Activated naive CD4-positive, alpha-beta T cell treated with anti-CD3 and anti-CD28 coated beads for 36 hours (primary cell): ENCODE measurements at regions of chr7 and their contacts with region 1.

Region 1: DNA sequence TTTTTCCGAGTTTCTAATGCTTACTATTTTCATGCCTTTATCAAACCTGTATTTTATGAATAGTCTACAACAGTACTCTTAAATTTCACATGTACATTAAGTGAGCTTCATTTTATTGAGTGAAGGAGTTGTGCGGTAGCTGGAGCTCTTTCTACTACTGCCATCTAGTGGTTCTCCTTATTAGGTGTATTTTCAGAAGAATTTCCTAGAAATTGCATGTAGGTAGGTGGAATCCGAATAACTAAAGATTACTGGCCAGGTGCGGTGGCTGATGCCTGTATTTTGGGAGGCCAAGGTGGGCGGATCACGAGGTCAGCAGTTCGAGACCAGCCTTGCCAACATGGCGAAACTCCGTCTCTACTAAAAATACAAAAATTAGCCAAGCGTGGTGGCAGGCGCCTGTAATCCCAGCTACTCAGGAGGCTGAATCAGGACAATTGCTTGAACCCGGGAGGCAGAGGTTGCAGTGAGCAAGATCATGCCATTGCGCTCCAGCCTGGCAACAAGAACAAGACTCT is 38.3 kb downstream of the LRRC72 start:
- DNase-seq: peak; percentile 33
- H3K4me3 Mint-ChIP-seq: no peak overlapping the region
- H3K27ac Mint-ChIP-seq: peak overlapping the region; percentile 68
- H3K4me1 Mint-ChIP-seq: peaks cover 18% of the 10 kb centered on the region
- H3K27me3 Mint-ChIP-seq: no peaks in the 10 kb centered on the region

Region 2: DNA sequence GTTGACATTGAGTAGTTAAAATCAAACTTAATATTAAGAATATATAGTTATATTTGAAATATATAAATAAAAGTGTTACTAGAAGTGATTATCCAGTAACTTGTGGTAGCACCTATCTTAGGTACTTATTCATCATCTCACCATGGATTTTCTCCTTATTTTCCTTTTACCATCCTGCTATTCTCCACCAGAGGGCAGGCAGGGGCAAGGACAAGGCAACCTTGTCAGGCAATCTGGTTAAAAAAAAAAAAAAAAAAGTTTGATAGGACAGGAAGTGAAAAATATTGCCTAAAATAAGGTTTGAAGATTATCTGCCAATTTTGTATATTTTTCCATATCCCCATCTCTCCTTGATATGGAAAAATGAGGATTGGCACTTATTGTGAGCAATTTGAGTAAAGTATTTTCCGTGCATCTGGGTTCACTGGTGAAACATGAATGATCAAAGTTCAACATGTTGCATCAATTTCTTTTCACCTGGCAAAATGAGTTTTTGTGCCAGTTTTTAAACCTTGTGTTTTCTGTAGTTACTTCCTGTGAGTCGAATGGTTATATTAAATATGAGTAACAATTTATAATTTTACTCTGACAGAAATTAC is 1259.9 kb before region 1 on chr7:
- CTCF ChIA-PET with region 1: no interaction called
- intact Hi-C with region 1: loop called (anchors 10 kb)
- DNase-seq: peak; percentile 13
- H3K4me3 Mint-ChIP-seq: no peak overlapping the region
- H3K27ac Mint-ChIP-seq: no peak overlapping the region
- H3K4me1 Mint-ChIP-seq: no peaks in the 10 kb centered on the region
- H3K27me3 Mint-ChIP-seq: no peaks in the 10 kb centered on the region

Region 3: GRCh38 chr7:16409777-16410176 is 155.2 kb before region 1 on chr7:
- CTCF ChIA-PET with region 1: no interaction called
- intact Hi-C with region 1: loop called (anchors 1 kb)
- DNase-seq: no peak
- H3K4me3 Mint-ChIP-seq: no peak overlapping the region
- H3K27ac Mint-ChIP-seq: no peak overlapping the region
- H3K4me1 Mint-ChIP-seq: no peaks in the 10 kb centered on the region
- H3K27me3 Mint-ChIP-seq: no peaks in the 10 kb centered on the region

Region 4: DNA sequence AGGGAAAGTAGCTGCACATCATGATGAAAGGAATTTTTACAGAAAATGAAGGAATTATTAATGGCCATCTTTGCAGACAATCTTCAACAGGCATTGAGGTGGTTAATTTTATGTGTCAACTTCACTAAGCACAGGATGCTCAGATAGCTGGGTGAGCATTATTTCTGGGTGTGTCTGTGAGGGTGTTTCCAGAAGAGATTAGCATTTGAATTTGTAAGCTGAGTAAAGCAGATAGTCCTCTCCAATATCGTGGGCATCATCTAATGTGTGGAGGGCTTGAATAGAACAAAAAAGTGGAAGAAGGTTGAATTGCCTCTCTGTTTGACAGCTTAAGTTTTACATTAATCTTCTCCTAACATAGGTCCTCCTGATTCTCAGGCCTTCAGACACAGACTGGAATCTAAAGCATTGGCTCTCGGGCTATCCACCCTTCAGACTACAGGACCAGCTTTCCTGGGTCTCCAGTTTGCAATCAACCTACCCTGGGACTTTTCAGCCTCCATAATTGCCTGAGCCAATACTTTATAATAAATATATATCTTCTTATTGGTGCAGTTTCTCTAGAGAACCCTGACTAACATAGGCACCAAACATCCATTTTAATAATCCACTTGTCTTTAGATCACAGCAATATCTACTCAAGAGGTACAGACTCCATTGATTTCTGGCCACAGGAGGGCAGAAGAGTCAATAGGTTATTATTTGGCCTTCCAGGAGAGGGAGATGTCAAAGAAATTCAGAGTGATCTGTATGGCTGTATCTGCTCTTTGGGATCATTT is 133.1 kb before region 1 on chr7:
- CTCF ChIA-PET with region 1: interaction called, 87 read pairs
- intact Hi-C with region 1: loop called (anchors 1 kb)
- DNase-seq: peak; percentile 54
- H3K4me3 Mint-ChIP-seq: no peak overlapping the region
- H3K27ac Mint-ChIP-seq: no peak overlapping the region
- H3K4me1 Mint-ChIP-seq: no peaks in the 10 kb centered on the region
- H3K27me3 Mint-ChIP-seq: no peaks in the 10 kb centered on the region

Region 5: DNA sequence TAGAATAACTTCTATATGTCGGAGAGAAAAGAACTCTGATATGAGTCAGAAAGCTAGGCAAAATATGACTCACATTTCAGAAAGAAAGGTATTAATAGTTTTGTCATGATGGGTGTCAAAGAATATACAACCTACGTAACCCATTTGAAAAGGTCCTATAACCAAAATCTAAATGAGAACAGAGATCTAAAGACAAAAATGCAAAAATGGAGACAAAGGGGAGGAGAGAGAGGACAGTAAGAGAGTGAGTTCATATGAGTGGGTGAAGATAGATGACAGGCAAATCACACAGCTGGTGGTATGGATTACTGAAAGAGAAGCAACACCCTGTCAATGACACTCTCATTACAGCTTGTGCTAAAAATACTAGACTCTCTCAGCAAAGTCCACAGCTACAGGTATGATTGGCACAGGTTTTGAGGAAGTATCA is 55.0 kb after region 1 on chr7:
- CTCF ChIA-PET with region 1: interaction called, 7 read pairs
- intact Hi-C with region 1: loop called (anchors 1 kb)
- DNase-seq: peak; percentile 33
- H3K4me3 Mint-ChIP-seq: peak overlapping the region; percentile 23
- H3K27ac Mint-ChIP-seq: peak overlapping the region; percentile 81
- H3K4me1 Mint-ChIP-seq: peaks cover 13% of the 10 kb centered on the region
- H3K27me3 Mint-ChIP-seq: no peaks in the 10 kb centered on the region

Region 6: GRCh38 chr7:17152721-17153120 is 587.8 kb after region 1 on chr7:
- CTCF ChIA-PET with region 1: no interaction called
- intact Hi-C with region 1: no loop called
- DNase-seq: no peak
- H3K4me3 Mint-ChIP-seq: no peak overlapping the region
- H3K27ac Mint-ChIP-seq: no peak overlapping the region
- H3K4me1 Mint-ChIP-seq: peaks cover 30% of the 10 kb centered on the region
- H3K27me3 Mint-ChIP-seq: peaks cover 2% of the 10 kb centered on the region